ENCODE measurements at regions of chr1 and their contacts with region 1.

Region 1: DNA sequence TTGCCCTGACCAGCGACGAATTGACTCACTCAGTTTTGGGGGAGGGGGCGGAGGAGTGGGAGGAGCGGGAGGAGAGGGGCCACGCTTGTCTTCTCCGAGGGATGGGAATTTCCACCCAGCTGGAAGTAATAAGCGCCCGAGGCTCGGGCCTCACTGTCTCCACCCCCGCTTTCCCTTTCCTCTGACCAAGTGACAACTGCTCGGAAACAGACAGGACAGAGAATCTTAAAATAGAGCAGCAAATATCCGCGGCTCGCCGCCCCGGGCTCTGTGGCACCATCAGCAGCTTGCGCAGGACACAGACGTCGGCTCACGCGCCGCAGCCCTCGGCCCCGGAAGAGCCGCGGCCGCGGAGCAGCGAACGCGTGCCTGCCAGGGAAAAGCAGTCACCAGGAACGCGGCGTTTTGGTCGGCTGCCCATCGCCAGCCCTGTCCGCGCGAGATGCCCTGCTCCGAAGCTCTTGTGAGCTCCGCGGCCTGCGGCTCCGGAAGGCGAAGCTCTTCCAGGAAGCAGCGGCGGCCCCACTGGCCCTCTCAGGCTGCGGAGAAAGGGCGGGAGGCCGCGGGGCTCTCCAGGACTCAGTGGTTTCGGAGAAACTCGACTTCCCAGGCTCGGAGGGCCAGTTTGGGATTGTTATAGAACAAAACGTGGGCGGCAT is 10.7 kb upstream of the RGS16 start:
- DNase-seq: peak; percentile 46
- H3K4me3 Mint-ChIP-seq: peak overlapping the region; percentile 79
- H3K27ac Mint-ChIP-seq: no peak overlapping the region
- H3K4me1 Mint-ChIP-seq: peaks cover 34% of the 10 kb centered on the region
- H3K27me3 Mint-ChIP-seq: peaks cover 40% of the 10 kb centered on the region
- CTCF ChIP-seq: no peak

Region 2: GRCh38 chr1:182374101-182374834 is 240.7 kb before region 1 on chr1:
- CTCF ChIA-PET with region 1: no interaction called
- intact Hi-C with region 1: no loop called
- DNase-seq: no peak
- H3K4me3 Mint-ChIP-seq: no peak overlapping the region
- H3K27ac Mint-ChIP-seq: no peak overlapping the region
- H3K4me1 Mint-ChIP-seq: no peaks in the 10 kb centered on the region
- H3K27me3 Mint-ChIP-seq: no peaks in the 10 kb centered on the region
- CTCF ChIP-seq: no peak

Region 3: GRCh38 chr1:182604169-182605164 is 10.5 kb before region 1 on chr1 and contains the start of gene RGS16:
- CTCF ChIA-PET with region 1: interaction called, 10 read pairs
- intact Hi-C with region 1: no loop called
- DNase-seq: peak; percentile 95
- H3K4me3 Mint-ChIP-seq: peak within 1 kb of the TSS; percentile 77
- H3K27ac Mint-ChIP-seq: no peak within 1 kb of the TSS
- H3K4me1 Mint-ChIP-seq: peaks cover 7% of the 10 kb centered on the region
- H3K27me3 Mint-ChIP-seq: peaks cover 30% of the 10 kb centered on the region
- CTCF ChIP-seq: no peak
- total RNA-seq, gene RGS16: 1.2 and 1.7 TPM in 2 replicates

Region 4: GRCh38 chr1:182687363-182687762 is 72.4 kb after region 1 on chr1:
- CTCF ChIA-PET with region 1: no interaction called
- intact Hi-C with region 1: loop called (anchors 5 kb)
- DNase-seq: peak; percentile 63
- H3K4me3 Mint-ChIP-seq: no peak overlapping the region
- H3K27ac Mint-ChIP-seq: peak overlapping the region; percentile 48
- H3K4me1 Mint-ChIP-seq: no peaks in the 10 kb centered on the region
- H3K27me3 Mint-ChIP-seq: no peaks in the 10 kb centered on the region
- CTCF ChIP-seq: no peak